ENCODE measurements at regions of chr1 and their contacts with region 1.

Region 1: DNA sequence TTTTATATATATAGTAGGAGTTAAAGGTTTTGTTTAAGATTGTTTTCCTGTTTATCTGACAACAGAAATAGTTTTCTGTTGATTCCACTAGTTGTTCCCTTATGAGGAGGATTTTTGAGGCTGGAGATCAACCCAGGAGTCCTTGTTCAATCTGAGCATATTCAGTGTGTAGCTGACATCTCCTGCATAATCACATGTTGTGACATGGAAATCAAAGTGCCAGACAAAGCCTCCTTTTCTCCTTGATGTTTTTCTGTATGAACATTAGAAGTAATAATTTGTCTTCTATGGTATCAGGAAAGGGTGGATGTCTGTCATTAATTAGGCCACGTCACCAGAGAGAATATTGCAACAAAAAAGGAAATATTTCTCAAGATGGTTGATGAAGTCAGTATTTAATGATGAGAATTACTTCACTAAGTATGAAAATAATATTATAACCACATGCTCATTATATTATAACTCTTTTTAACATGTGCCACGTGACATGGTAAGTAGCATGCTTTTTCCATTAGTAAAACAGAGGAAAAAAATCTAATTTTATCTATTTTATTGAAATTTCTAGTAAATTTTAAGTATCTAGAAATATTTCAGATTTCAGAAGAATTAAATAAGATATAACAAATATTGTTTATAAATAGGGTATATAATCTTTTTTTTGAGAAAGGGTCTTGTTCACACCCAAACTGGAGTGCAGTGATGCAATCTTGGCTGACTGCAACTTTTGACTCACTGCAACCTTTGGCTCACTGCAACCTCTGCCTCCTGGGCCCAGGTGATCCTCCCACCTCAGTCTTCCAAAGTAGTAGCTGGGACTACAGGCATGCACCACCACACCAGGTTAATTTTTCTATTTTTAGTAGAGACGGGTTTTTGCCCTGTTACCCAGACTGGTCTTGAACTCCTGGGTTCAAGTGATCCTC is 223.5 kb downstream of the HMCN1 start:
- DNase-seq: no peak
- H3K4me3 Mint-ChIP-seq: no peak overlapping the region
- H3K27ac Mint-ChIP-seq: no peak overlapping the region
- H3K4me1 Mint-ChIP-seq: no peaks in the 10 kb centered on the region
- H3K27me3 Mint-ChIP-seq: peaks cover 2% of the 10 kb centered on the region

Region 2: DNA sequence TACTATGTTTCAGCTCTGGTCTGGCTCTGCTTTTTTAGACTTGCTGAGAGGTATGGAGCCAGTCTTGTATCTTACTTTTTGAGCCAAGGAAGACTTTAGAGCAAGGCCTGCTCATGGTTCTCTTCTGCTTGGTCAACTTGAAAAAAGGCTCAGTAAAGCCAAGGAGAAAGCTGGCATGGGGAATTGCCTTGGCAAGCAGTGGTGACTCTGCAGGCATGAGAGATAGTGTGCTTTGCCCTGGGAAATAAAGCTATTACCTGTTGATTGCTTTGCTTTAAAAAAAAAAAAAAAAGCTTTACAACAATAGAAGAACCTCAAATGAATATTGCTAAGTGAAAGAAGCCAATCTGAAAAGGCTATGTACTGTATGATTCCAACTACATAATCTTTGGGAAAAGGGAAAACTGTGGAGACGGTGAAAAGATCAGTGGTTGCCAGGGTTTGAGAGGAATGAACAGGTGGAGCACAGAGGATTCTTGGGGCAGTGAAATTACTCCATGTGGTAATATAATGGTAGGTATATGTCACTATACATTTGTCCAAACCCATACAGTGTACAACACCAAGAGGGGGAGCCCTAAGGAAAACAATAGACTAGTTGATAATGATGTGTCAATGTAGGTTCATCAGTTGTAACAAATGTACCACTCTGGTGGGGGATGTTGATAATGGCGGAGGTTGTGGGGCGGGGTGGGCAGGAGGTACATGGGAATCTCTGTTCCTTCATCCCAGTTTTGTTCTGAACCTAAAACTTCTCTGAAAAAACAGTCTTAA is 135.9 kb before region 1 on chr1:
- intact Hi-C with region 1: no loop called
- DNase-seq: no peak
- H3K4me3 Mint-ChIP-seq: no peak overlapping the region
- H3K27ac Mint-ChIP-seq: no peak overlapping the region
- H3K4me1 Mint-ChIP-seq: no peaks in the 10 kb centered on the region
- H3K27me3 Mint-ChIP-seq: peaks cover 2% of the 10 kb centered on the region

Region 3: GRCh38 chr1:185942961-185943360 is 14.7 kb before region 1 on chr1:
- intact Hi-C with region 1: loop called (anchors 1 kb)
- DNase-seq: no peak
- H3K4me3 Mint-ChIP-seq: no peak overlapping the region
- H3K27ac Mint-ChIP-seq: no peak overlapping the region
- H3K4me1 Mint-ChIP-seq: no peaks in the 10 kb centered on the region
- H3K27me3 Mint-ChIP-seq: peaks cover 3% of the 10 kb centered on the region

Region 4: DNA sequence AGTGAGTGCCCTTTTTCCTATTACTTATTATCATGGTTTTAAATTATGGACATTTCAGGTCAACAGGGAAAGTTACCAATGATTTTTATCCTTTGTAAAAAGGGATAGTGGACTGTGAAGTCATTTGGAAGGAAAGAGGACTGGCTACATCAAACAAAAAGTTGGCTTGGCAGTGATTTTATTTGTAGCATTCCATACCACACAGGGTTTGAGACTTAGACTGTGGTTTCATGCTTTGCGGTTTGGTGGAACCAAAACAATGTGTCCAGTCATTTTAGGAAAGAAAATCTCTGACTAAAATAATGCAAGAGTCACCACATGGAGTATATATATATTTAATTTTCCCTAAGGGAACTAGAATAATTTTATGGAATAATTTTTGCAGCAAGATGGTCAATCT is 15.9 kb after region 1 on chr1:
- intact Hi-C with region 1: no loop called
- DNase-seq: no peak
- H3K4me3 Mint-ChIP-seq: no peak overlapping the region
- H3K27ac Mint-ChIP-seq: no peak overlapping the region
- H3K4me1 Mint-ChIP-seq: no peaks in the 10 kb centered on the region
- H3K27me3 Mint-ChIP-seq: peaks cover 2% of the 10 kb centered on the region

Region 5: DNA sequence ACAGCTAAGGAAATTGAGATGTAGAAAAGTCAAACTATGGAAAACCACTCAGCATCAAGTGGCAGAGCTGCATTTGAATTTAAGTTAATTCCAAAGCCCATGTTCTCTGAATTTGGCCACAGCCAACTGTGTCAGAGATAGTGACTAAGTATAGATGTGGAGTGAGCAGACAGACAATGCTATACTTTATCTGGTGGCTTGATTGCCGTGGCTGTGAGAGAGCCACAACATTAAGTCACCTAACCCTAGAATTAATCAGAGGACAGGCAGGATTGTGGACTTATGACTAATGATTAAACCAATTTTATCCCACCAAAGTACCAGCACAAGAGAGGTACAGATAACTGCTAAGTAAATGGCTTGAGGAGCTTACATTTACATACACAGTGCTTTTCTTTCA is 207.6 kb after region 1 on chr1:
- intact Hi-C with region 1: no loop called
- DNase-seq: no peak
- H3K4me3 Mint-ChIP-seq: no peak overlapping the region
- H3K27ac Mint-ChIP-seq: no peak overlapping the region
- H3K4me1 Mint-ChIP-seq: no peaks in the 10 kb centered on the region
- H3K27me3 Mint-ChIP-seq: peaks cover 7% of the 10 kb centered on the region

Region 6: DNA sequence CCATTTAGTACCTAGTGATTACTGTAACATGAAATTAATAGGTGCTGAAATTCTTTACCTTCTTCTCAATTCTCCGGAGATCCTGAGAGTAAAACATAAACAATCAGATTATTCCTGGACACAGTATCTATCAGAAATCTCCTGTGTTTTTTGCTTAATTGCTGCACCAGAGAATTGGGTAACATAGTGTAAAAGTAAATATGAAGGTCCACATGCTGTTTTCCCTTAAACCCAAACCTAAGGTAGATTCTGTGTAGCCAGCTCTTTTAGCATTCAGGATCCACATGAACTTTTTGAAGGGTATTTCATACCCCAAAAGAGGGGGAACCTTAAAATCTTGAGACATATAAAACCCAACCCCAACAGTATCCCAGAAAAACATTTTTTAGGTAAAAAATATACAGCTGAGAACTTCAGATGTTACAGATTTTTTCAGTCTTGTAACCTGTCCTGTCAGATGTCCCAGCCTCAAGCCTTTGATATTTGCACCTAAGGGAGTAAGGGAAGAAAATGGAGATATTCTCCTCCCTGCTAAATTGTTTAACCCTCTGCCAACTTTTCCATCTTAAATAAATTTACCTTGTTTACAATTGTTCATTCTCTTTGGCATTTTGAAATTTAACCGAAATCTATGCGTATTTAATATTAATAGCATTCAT is 429.2 kb after region 1 on chr1:
- intact Hi-C with region 1: no loop called
- DNase-seq: no peak
- H3K4me3 Mint-ChIP-seq: no peak overlapping the region
- H3K27ac Mint-ChIP-seq: no peak overlapping the region
- H3K4me1 Mint-ChIP-seq: peaks cover under 1% of the 10 kb centered on the region
- H3K27me3 Mint-ChIP-seq: no peaks in the 10 kb centered on the region

Measured in activated T-helper 1 cell treated with anti-CD3 and anti-CD28 coated beads, Interleukin-12 subunit alpha, Interleukin-12 subunit beta, Interleukin-2, Interleukin-4 antibody, amounts not matched to agents 30 ng/mL and 10 ng/mL and 1 ng/mL, durations not matched to agents 14 hours and 24 hours and 36 hours (primary cell).